ENCODE measurements at regions of chr6 and their contacts with region 1.

Region 1: DNA sequence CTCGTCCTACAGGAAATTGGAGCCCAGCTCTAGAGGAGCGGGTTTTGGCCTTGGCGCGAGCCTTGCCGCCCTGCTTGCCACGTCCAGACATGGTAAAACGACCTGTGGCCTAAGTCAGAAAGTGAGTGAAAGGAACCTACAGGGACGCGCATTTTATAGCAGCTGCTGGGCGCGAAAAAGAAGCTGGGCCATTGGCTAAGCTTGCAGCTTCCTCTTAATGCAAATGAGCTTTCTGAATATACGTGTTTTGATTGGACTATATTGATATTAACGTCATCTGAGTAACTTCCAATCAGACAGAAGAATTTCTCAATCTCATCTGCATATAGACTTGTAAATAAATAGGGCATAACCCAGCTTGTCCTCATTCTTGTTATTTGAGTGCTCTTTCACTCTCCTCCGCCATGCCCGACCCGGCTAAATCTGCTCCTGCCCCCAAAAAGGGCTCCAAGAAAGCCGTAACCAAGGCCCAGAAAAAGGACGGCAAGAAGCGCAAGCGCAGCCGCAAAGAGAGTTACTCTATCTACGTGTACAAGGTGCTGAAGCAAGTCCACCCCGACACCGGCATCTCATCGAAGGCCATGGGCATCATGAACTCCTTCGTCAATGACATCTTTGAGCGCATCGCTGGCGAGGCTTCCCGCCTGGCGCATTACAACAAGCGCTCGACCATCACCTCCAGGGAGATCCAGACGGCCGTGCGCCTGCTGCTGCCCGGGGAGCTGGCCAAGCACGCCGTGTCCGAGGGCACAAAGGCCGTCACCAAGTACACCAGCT is 18.9 kb downstream of the OR2B2 start:
- DNase-seq: peak; percentile 97
- ATAC-seq: peak; percentile 67
- H3K4me3 ChIP-seq: peak overlapping the region; percentile 68 to 100 (median 88)
- H3K4me3 Mint-ChIP-seq: no peak overlapping the region
- H3K27ac ChIP-seq: peak overlapping the region; percentile 76 to 77
- H3K27ac Mint-ChIP-seq: no peak overlapping the region
- H3K4me1 ChIP-seq: peaks cover 18 to 38% of the 10 kb centered on the region in 2 donors
- H3K4me1 Mint-ChIP-seq: peaks cover 36% of the 10 kb centered on the region
- H3K27me3 ChIP-seq: no peaks in the 10 kb centered on the region
- H3K27me3 Mint-ChIP-seq: no peaks in the 10 kb centered on the region
- CTCF ChIP-seq: no peak

Region 2: GRCh38 chr6:26031595-26032339 is 1861.5 kb before region 1 on chr6:
- CTCF ChIA-PET with region 1: interaction called, 7 read pairs
- POLR2A ChIA-PET with region 1: interaction called, 6 read pairs
- intact Hi-C with region 1: loop called (anchors 5 kb)
- DNase-seq: peak; percentile 90
- ATAC-seq: peak; percentile 63
- H3K4me3 ChIP-seq: peak overlapping the region; percentile 67 to 85 (median 69)
- H3K4me3 Mint-ChIP-seq: peak overlapping the region; percentile 96
- H3K27ac ChIP-seq: peak overlapping the region; percentile 76 to 78
- H3K27ac Mint-ChIP-seq: peak overlapping the region; percentile 87
- H3K4me1 ChIP-seq: peaks cover 26 to 36% of the 10 kb centered on the region in 2 donors
- H3K4me1 Mint-ChIP-seq: peaks cover 46% of the 10 kb centered on the region
- H3K27me3 ChIP-seq: no peaks in the 10 kb centered on the region
- H3K27me3 Mint-ChIP-seq: no peaks in the 10 kb centered on the region
- CTCF ChIP-seq: no peak

Region 3: DNA sequence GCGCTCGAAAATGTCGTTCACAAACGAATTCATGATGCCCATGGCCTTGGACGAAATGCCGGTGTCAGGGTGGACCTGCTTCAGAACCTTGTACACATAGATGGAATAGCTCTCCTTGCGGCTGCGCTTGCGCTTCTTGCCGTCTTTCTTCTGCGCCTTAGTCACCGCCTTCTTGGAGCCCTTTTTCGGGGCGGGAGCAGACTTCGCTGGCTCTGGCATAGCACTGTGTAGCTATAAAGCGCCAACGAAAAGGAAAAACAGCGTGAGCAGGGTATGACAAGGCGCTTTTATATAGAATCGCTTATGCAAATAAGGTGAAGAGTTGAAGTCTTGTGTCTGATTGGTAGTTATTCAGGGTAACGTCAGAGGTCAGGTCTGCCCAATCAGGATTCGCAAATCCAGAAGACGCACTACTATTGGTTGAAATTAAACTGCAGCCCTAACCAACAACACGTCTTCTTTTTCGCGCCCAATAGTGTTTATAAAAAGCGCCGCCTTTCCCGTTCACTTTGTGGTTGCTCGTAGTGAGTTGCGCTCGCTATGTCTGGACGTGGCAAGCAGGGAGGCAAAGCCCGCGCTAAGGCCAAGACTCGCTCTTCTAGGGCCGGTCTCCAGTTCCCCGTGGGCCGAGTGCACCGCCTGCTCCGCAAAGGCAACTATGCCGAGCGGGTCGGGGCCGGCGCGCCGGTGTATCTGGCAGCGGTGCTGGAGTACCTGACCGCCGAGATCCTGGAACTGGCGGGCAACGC is 760.5 kb before region 1 on chr6:
- CTCF ChIA-PET with region 1: interaction called, 28 read pairs
- POLR2A ChIA-PET with region 1: interaction called, 45 read pairs
- intact Hi-C with region 1: loop called (anchors 1 kb)
- DNase-seq: no peak
- ATAC-seq: peak; percentile 84
- H3K4me3 ChIP-seq: peak overlapping the region; percentile 70 to 81 (median 74)
- H3K4me3 Mint-ChIP-seq: no peak overlapping the region
- H3K27ac ChIP-seq: peak overlapping the region; percentile 83
- H3K27ac Mint-ChIP-seq: no peak overlapping the region
- H3K4me1 ChIP-seq: peaks cover 14 to 24% of the 10 kb centered on the region in 2 donors
- H3K4me1 Mint-ChIP-seq: peaks cover 23% of the 10 kb centered on the region
- H3K27me3 ChIP-seq: no peaks in the 10 kb centered on the region
- H3K27me3 Mint-ChIP-seq: no peaks in the 10 kb centered on the region
- CTCF ChIP-seq: no peak

Region 4: DNA sequence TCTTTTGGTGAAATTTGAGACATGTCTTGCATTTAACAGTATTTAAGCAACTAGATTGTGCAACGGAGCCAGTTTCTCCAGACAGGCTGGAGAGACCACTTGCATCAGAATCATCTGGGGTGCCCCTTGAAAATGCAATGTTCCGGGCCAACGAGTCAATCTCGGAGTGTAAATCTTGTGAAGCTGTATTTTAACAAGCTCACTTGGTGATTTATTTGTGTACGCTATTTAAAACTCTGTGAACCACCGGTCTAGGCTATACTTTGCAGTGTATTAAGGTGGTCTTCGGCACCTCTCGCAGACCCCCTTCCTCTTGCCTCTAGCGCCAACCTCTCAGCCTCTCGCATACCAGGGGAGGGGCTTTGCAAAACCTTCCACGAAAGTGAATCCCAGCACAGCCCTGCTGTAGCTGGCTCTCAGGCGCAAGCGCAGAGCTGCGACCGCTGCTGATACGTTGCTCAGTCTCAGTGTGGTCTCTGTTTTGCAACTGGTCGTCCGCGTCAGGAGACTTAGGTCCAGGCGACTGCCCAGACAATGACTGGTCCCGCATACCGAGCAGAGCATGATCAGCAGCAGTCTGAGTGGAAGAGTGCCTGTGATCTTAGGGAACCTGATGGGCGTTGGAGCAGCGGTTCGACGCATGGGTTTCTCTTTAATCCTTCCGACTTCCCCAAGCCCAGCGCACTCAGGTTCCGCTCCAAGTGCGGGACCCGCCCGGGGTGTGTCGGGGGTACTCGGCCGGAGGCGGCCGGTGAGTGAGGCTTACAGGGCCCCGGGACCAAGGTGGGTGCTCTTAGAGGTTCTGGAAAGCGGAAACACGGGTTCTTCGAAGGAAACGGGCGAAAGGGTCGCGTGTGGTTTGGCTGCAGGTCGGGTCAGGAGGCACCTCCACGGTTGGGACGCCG is 504.7 kb before region 1 on chr6 and contains the start of gene ZNF391:
- CTCF ChIA-PET with region 1: no interaction called
- POLR2A ChIA-PET with region 1: no interaction called
- intact Hi-C with region 1: loop called (anchors 10 kb)
- DNase-seq: peak; percentile 88
- ATAC-seq: peak; percentile 87
- H3K4me3 ChIP-seq: peak within 1 kb of the TSS; percentile 70 to 97 (median 94)
- H3K4me3 Mint-ChIP-seq: peak within 1 kb of the TSS; percentile 99
- H3K27ac ChIP-seq: peak within 1 kb of the TSS; percentile 64 to 83
- H3K27ac Mint-ChIP-seq: peak within 1 kb of the TSS; percentile 98
- H3K4me1 ChIP-seq: peaks cover 10 to 16% of the 10 kb centered on the region in 2 donors
- H3K4me1 Mint-ChIP-seq: peaks cover 17% of the 10 kb centered on the region
- H3K27me3 ChIP-seq: peaks cover 0 to 2% (median 0%) of the 10 kb centered on the region in 4 experiments
- H3K27me3 Mint-ChIP-seq: peaks cover under 1% of the 10 kb centered on the region
- CTCF ChIP-seq: no peak
- total RNA-seq, gene ZNF391: 4.4 and 7.0 TPM in 2 replicates

Region 5: DNA sequence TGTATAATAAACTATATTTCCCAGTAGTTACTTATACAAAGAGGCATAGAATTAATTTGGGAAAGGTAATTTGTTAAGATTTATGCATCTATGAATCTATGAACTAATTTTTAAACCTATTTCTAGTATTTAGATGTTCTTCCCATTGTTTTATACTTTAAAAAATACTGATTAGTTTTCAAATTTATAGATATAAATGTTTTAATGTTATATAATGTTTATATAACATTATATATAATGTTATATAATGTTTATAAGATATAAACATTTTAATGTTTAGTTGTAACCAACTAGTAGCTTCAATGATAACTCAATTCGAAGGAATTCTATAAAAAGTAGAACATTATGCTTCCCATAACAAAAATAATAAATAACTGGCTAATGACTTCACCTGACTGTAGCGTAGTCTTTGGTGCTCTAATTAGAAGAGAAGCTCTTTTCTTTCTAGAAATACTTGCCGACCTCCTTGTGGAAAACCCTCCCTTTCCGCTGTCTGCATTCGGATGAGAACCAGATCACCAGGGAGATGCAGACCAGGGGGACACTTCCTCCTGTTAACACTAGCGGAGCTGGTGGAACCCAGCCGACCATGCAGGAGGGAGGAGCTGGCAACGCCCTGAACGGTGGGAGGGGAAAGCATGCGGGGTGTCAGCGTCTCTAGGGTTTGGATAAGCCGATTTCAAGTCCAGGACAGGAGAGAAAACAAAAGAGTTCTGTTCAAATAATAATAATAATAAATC is 139.4 kb before region 1 on chr6:
- CTCF ChIA-PET with region 1: interaction called, 36 read pairs
- POLR2A ChIA-PET with region 1: interaction called, 5 read pairs
- intact Hi-C with region 1: loop called (anchors 2 kb)
- DNase-seq: peak; percentile 82
- ATAC-seq: peak; percentile 48
- H3K4me3 ChIP-seq: peak overlapping the region; percentile 42 to 73 (median 63)
- H3K4me3 Mint-ChIP-seq: peak overlapping the region; percentile 91
- H3K27ac ChIP-seq: no peak overlapping the region
- H3K27ac Mint-ChIP-seq: peak overlapping the region; percentile 91
- H3K4me1 ChIP-seq: peaks cover 22 to 25% of the 10 kb centered on the region in 2 donors
- H3K4me1 Mint-ChIP-seq: peaks cover 30% of the 10 kb centered on the region
- H3K27me3 ChIP-seq: peaks cover 0 to 26% (median 5%) of the 10 kb centered on the region in 4 experiments
- H3K27me3 Mint-ChIP-seq: peaks cover 6% of the 10 kb centered on the region
- CTCF ChIP-seq: no peak

Region 6: GRCh38 chr6:27838058-27838944 is 54.9 kb before region 1 on chr6:
- CTCF ChIA-PET with region 1: interaction called, 21 read pairs
- POLR2A ChIA-PET with region 1: interaction called, 76 read pairs
- intact Hi-C with region 1: loop called (anchors 1 kb)
- DNase-seq: peak; percentile 98
- ATAC-seq: peak; percentile 80
- H3K4me3 ChIP-seq: peak overlapping the region; percentile 82 to 99 (median 90)
- H3K4me3 Mint-ChIP-seq: no peak overlapping the region
- H3K27ac ChIP-seq: peak overlapping the region; percentile 94 to 96
- H3K27ac Mint-ChIP-seq: no peak overlapping the region
- H3K4me1 ChIP-seq: peaks cover 28 to 29% of the 10 kb centered on the region in 2 donors
- H3K4me1 Mint-ChIP-seq: peaks cover 18% of the 10 kb centered on the region
- H3K27me3 ChIP-seq: peaks cover 0 to 4% (median 0%) of the 10 kb centered on the region in 4 experiments
- H3K27me3 Mint-ChIP-seq: no peaks in the 10 kb centered on the region
- CTCF ChIP-seq: no peak

Region 7: DNA sequence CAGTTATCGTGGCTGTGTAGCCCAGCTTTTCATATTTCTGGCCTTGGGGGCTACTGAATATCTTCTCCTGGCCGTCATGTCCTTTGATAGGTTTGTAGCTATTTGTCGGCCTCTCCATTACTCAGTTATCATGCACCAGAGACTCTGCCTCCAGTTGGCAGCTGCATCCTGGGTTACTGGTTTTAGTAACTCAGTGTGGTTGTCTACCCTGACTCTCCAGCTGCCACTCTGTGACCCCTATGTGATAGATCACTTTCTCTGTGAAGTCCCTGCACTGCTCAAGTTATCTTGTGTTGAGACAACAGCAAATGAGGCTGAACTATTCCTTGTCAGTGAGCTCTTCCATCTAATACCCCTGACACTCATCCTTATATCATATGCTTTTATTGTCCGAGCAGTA is 64.3 kb after region 1 on chr6:
- CTCF ChIA-PET with region 1: no interaction called
- POLR2A ChIA-PET with region 1: no interaction called
- intact Hi-C with region 1: no loop called
- DNase-seq: no peak
- ATAC-seq: no peak
- H3K4me3 ChIP-seq: no peak overlapping the region
- H3K4me3 Mint-ChIP-seq: no peak overlapping the region
- H3K27ac ChIP-seq: no peak overlapping the region
- H3K27ac Mint-ChIP-seq: no peak overlapping the region
- H3K4me1 ChIP-seq: no peaks in the 10 kb centered on the region
- H3K4me1 Mint-ChIP-seq: peaks cover 2% of the 10 kb centered on the region
- H3K27me3 ChIP-seq: peaks cover 0 to 6% (median 0%) of the 10 kb centered on the region in 4 experiments
- H3K27me3 Mint-ChIP-seq: peaks cover 8% of the 10 kb centered on the region
- CTCF ChIP-seq: no peak

Region 8: DNA sequence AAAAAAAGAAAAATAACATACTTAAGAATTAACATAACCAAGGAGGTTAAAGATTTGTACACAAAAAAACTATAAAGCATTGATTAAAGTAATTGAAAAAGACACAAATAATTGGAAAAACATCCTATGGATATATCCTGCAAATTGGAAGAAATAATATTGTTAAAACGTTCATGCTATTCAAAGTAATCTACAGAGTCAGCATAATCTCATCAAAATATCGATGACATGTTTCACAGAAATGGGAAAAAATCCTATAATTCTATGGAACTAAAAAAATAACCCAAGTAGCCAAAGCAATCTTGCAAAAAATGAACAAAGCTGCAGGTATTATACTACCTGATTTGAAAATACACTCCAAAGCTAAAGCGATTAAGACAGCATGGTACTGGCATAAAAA is 1452.1 kb after region 1 on chr6:
- CTCF ChIA-PET with region 1: no interaction called
- POLR2A ChIA-PET with region 1: no interaction called
- intact Hi-C with region 1: no loop called
- DNase-seq: no peak
- ATAC-seq: no peak
- H3K4me3 ChIP-seq: no peak overlapping the region
- H3K4me3 Mint-ChIP-seq: no peak overlapping the region
- H3K27ac ChIP-seq: no peak overlapping the region
- H3K27ac Mint-ChIP-seq: no peak overlapping the region
- H3K4me1 ChIP-seq: no peaks in the 10 kb centered on the region
- H3K4me1 Mint-ChIP-seq: no peaks in the 10 kb centered on the region
- H3K27me3 ChIP-seq: no peaks in the 10 kb centered on the region
- H3K27me3 Mint-ChIP-seq: peaks cover 11% of the 10 kb centered on the region
- CTCF ChIP-seq: no peak